Mammary epithelial cell (primary cell): ENCODE measurements at regions of chr1 and their contacts with region 1.

Region 1: GRCh38 chr1:244302889-244303613 is 148.7 kb downstream of the ADSS2 start:
- DNase-seq: peak; percentile 72
- H3K4me3 ChIP-seq: no peak overlapping the region
- H3K27ac ChIP-seq: no peak overlapping the region
- H3K4me1 ChIP-seq: peaks cover 15% of the 10 kb centered on the region
- H3K27me3 ChIP-seq: no peaks in the 10 kb centered on the region
- CTCF ChIP-seq: no peak

Region 2: GRCh38 chr1:244326764-244327163 is 23.7 kb after region 1 on chr1:
- CTCF ChIA-PET with region 1: no interaction called
- dilution Hi-C with region 1: no loop called
- in situ Hi-C with region 1: no loop called
- intact Hi-C with region 1: no loop called
- DNase-seq: no peak
- H3K4me3 ChIP-seq: no peak overlapping the region
- H3K27ac ChIP-seq: no peak overlapping the region
- H3K4me1 ChIP-seq: peaks cover 23% of the 10 kb centered on the region
- H3K27me3 ChIP-seq: no peaks in the 10 kb centered on the region
- CTCF ChIP-seq: no peak

Region 3: DNA sequence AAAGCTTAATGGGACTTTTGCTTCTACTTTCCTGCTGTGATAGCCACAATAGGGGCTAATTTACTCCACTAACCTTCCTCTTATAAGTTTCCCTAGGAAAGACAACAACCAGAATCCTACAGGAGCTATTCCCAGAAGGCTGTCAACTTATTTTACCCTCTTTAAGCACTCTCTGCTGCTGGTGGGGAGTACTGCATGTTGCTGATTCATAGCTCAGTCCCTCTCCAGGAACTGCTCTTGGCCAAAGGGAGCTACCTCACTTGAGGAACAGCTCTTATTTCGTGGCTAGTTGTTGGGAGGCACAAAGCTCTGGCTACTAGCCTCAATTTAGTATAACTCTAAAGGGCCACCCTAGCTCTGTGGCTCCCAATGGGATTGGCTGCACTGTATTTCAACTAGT is 111.5 kb after region 1 on chr1:
- CTCF ChIA-PET with region 1: no interaction called
- dilution Hi-C with region 1: no loop called
- in situ Hi-C with region 1: no loop called
- intact Hi-C with region 1: loop called (anchors 2 kb)
- DNase-seq: peak; percentile 42
- H3K4me3 ChIP-seq: no peak overlapping the region
- H3K27ac ChIP-seq: no peak overlapping the region
- H3K4me1 ChIP-seq: no peaks in the 10 kb centered on the region
- H3K27me3 ChIP-seq: no peaks in the 10 kb centered on the region
- CTCF ChIP-seq: peak; percentile 26 to 47

Region 4: GRCh38 chr1:244451951-244452795 is 149.1 kb after region 1 on chr1:
- CTCF ChIA-PET with region 1: no interaction called
- dilution Hi-C with region 1: no loop called
- in situ Hi-C with region 1: no loop called
- intact Hi-C with region 1: loop called (anchors 1 kb)
- DNase-seq: peak; percentile 99
- H3K4me3 ChIP-seq: peak overlapping the region; percentile 49 to 97 (median 50)
- H3K27ac ChIP-seq: peak overlapping the region; percentile 31
- H3K4me1 ChIP-seq: peaks cover 15% of the 10 kb centered on the region
- H3K27me3 ChIP-seq: no peaks in the 10 kb centered on the region
- CTCF ChIP-seq: peak; percentile 32 to 34